ENCODE measurements at regions of chr20 and their contacts with region 1.

Region 1: GRCh38 chr20:35303735-35304491 is 11.7 kb upstream of the FAM83C start:
- DNase-seq: peak; percentile 56 to 92 (median 81)

Region 2: DNA sequence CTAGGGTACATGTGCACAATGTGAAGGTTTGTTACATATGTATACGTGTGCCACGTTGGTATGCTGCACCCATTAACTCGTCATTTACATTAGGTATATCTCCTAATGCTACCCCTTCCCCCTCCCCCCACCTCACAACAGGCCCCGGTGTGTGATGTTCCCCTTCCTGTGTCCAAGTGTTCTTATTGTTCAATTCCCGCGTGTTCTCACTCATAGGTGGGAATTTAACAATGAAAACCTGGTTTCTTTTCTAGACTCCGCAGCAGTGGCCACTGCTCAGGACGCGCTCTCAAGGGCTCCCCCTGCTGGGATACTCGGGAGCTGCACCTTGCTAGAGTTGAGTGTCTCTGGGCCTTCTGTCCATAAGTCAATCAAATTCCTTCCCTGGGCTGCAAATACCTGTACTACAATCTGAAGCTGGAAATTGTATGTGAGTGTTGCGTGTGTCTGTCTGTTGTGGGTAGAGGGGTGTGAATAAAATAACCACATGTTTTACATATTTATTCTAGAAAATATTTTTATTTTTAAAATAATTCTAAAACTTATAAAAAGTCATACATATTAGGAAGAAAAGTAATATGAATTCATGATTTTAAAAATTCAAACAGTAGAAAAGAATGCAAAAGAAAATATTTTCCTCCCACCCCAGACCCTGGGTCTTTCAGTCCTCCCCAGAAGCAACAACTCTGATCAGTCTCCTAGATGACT is 143.3 kb after region 1 on chr20:
- intact Hi-C with region 1: loop called (anchors 10 kb)
- DNase-seq: peak; percentile 29 to 96 (median 88)